Left ventricle myocardium superior (tissue), 1 donor: ENCODE measurements at regions of chr9 and their contacts with region 1.

Region 1: DNA sequence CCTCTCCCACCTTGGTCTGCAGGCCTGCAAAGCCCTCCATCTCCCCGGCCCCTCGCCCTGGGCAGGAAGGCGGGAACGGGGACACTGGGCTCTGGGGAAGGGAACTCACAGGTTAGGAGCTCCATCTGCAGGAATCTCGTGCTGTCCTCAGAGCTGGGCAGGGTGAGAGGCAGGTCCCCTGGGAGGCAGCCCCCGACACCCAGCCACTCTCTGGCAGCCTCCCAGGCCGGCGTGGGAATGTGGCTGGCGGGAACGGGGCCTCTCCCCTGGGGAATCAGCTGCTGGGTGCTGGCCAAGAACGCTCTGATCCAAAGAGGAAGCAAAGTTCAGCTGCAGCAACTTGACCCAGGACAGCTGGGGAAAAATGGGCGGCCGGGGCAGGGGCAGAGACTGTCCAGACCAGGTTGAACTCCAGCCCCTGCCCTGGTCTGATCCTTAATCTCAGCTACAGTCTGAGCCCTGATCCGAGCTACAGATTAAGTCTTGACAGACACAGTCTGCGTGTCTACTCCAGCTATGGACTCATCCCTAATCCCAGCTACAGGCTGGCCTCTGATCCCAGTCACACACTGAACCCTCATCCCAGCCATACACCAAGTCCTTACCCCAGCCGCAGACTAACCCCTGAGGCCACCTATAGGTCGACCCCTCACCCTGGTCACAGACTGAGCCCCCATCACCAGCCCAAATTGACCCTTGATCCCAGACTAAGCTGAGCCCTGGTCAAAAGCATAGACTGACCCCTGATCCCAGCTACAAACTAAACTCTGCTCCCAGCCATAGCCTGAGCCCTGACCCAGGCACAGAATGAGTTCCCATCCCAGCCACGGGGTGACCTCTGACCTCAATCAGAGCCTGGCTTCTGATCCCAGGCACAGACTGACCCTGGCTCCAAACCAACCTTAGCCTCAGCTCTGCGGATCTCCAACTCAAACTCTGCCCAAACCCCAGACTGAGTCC is 37.3 kb upstream of the EGFL7 start:
- DNase-seq: peak; percentile 93
- ATAC-seq: peak; percentile 85

Region 2: DNA sequence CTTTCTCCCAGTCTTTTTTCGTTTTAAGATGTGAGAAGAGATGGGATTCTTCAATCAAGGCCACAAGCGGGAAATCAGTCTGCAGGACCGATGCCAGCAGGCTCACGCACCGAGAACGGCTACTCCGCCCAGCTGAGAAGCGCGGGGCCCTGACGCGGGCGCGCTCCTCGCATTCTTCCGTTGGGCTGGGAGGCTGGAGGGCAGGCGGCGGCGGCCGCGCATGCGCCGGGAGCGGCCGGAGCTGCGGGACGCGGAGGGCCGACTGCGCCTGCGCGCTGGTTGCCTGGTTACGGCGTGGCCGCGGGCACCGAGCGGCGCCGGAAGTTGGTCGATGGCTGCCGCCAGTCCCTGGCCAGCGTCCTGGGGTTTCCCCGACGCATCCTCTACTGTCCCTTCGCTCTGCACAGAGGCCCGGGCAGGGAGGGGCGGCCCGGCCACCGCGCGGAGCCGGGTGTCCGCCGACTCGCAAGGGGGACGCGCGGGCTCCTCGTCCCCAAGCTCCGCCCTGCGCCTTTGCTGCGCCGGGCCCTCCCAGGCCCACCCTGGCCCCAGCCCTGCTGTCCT is 141.7 kb before region 1 on chr9:
- intact Hi-C with region 1: loop called (anchors 2 kb)
- DNase-seq: peak; percentile 98
- ATAC-seq: peak; percentile 70